ENCODE measurements at regions of chr11 and their contacts with region 1.

Region 1: GRCh38 chr11:73661035-73661628 is 14.8 kb downstream of the PLEKHB1 start:
- DNase-seq: peak; percentile 91
- ATAC-seq: peak; percentile 96 to 97

Region 2: DNA sequence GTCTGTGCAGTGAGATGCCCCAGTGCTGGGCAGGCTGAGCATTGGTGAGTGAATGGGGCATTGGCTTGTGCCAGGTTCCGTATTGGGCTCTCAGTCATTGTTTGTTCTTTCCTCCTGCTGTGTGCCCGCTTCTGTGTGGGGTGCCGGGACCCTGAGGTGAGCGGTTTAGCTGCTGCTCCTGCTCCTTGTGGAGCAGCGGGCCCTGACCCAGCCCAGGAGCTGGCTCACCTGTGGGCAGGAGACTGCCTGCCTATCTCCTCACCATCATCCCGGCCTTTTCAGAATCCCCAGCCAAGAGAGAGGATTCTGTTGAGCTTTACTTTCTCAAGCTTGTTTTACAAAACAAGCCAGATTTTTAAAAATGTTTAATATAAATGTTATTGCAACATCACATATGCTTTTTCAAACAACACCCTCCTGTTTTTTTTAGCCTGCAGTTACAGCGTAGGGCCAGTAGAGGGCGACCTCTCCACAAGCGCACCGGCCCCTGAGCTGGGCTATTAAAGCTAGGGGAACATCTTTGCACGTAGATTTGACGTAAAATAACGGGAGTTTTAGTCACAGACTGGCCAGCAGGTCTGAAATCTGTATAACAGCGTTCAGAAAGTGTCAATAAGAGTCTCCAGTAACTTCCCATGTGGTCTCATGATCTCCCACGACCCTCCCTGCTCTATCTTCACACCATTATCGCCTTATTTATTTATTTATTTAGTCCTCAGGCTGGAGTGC is 310.1 kb before region 1 on chr11:
- intact Hi-C with region 1: loop called in 1 of 2 experiments (anchors 5 kb)
- DNase-seq: peak; percentile 61
- ATAC-seq: peak; percentile 49 to 58

Region 3: GRCh38 chr11:73404048-73404447 is 257.1 kb before region 1 on chr11:
- intact Hi-C with region 1: loop called (anchors 2 to 5 kb)
- DNase-seq: peak; percentile 71
- ATAC-seq: peak; percentile 82 to 87

Region 4: DNA sequence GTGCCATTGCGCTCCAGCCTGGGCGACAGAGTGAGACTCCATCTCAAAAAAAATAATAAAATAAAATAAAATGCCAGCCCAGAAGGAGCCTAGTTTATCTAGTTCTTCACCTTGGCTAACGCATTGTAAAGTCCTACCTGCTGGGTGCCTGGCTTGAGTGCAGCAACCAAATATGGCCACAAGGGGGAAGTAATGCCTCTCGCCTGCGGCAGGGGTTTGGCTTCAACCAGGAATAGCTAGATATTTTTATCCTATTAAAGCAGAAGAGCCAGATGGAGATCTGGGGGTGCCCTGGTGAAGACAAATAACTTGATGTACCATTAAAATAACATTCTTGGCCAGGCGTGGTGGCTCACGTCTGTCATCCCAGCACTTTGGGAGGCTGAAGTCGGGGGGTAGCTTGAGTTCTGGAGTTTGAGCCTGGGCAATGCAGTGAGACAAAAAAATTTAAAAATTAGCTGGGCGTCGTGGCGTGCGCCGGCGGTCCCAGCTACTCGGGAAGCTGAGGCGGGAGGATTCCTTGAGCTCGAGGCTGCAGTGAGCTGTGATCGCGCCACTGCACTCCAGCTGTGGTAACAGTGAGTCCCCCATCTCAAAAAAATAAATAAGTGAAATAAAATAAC is 35.3 kb before region 1 on chr11:
- intact Hi-C with region 1: loop called (anchors 2 to 5 kb)
- DNase-seq: peak; percentile 69
- ATAC-seq: peak; percentile 82 to 83

Measured in left cardiac atrium (tissue), 4 donors.